Mammary epithelial cell (primary cell): ENCODE measurements at regions of chr10 and their contacts with region 1.

Region 1: DNA sequence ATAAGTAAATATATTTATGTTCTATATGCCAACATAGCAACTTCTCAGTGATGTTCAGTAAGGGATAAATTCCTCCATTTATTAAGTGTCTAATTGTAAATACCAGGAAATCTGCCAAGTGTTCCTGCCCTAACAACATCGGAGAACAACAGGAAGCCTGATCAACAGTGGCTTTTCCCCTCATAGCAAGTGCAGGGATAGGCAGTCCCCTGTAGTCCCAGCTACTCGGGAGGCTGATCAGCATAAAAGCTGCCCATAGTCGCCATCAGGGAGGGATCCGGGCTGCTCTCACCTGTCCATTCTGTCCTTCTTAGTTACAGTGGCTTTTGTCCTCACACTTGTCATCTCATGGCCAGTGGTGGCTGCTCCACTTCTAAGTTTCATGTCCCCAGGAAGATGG is 141.3 kb downstream of the IDE start:
- DNase-seq: no peak
- H3K4me3 ChIP-seq: no peak overlapping the region
- H3K27ac ChIP-seq: no peak overlapping the region
- H3K4me1 ChIP-seq: no peaks in the 10 kb centered on the region
- H3K27me3 ChIP-seq: no peaks in the 10 kb centered on the region
- CTCF ChIP-seq: no peak

Region 2: GRCh38 chr10:91856637-91857036 is 576.0 kb before region 1 on chr10:
- CTCF ChIA-PET with region 1: no interaction called
- dilution Hi-C with region 1: no loop called
- in situ Hi-C with region 1: no loop called
- intact Hi-C with region 1: loop called (anchors 10 kb)
- DNase-seq: no peak
- H3K4me3 ChIP-seq: no peak overlapping the region
- H3K27ac ChIP-seq: no peak overlapping the region
- H3K4me1 ChIP-seq: no peaks in the 10 kb centered on the region
- H3K27me3 ChIP-seq: no peaks in the 10 kb centered on the region
- CTCF ChIP-seq: peak; percentile 36 to 53

Region 3: DNA sequence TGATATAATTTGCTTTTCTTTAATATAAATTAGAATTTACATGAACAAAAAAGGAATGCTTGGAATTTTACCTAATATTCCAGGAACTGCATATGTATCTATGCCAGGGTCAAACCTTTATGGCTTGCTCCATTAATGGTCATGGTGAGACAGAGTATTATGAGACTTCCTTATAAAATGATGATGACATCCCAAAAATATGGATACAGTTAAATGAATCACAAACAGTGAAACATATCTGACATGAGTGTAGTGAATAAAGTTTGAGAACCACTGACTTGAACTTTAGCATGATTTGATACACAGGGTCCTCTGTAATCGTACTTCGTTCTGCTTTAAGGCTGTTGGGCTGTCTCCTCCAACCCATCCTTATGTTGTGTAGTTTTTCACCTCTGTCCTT is 89.8 kb before region 1 on chr10:
- CTCF ChIA-PET with region 1: no interaction called
- dilution Hi-C with region 1: no loop called
- in situ Hi-C with region 1: no loop called
- intact Hi-C with region 1: no loop called
- DNase-seq: peak; percentile 16
- H3K4me3 ChIP-seq: no peak overlapping the region
- H3K27ac ChIP-seq: no peak overlapping the region
- H3K4me1 ChIP-seq: no peaks in the 10 kb centered on the region
- H3K27me3 ChIP-seq: no peaks in the 10 kb centered on the region
- CTCF ChIP-seq: no peak